Dorsolateral prefrontal cortex (tissue), 120 donors: ENCODE measurements at regions of chr4 and their contacts with region 1.

Region 1: GRCh38 chr4:80365928-80366327 is 30.4 kb downstream of the CFAP299 start:
- DNase-seq: peak in 2 of 10 donors; percentile 32
- H3K4me3 ChIP-seq: no peak overlapping the region
- H3K27ac ChIP-seq: no peak overlapping the region
- H3K27me3 ChIP-seq: peaks cover 0 to 3% (median 0%) of the 10 kb centered on the region in 45 donors
- CTCF ChIP-seq: peak in 48 of 56 donors; percentile 12 to 57 (median 36)

Region 2: DNA sequence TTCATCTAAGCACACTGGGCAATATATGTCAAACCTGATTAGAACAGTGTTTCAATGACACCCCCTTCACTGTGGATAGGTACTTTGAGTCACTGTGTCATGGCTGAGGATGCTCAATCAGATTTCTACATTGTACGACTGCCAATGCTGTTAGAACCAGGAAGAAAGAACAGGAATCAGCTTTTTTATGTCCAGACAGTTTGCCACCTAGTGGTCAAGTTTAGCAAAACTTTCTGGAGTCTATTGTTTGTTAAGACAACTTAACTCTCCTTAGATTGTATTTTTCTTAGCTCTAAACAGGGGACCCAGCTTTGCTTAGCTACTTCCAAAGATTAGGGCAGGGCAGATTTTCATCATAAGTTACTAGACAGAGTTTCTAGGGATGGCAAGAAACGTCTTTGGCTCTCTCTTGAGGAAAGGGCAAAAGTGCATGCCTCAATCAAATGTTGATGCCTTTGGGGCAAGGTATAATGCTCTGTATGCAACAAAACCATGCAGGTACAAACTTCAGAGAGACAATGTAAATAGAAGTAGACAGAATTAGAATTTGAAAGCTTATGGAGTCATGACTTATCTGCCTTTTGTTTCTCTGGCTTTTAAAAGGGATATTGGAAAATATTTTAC is 624.1 kb after region 1 on chr4:
- intact Hi-C with region 1: loop called (anchors 5 to 10 kb)
- DNase-seq: peak in 1 of 10 donors; percentile 9
- H3K4me3 ChIP-seq: no peak overlapping the region
- H3K27ac ChIP-seq: no peak overlapping the region
- H3K27me3 ChIP-seq: peaks cover 0 to 9% (median 0%) of the 10 kb centered on the region in 45 donors
- CTCF ChIP-seq: peak; percentile 54 to 84 (median 75)

Region 3: GRCh38 chr4:81040012-81040659 is 674.2 kb after region 1 on chr4:
- intact Hi-C with region 1: loop called in 1 of 2 experiments (anchors 5 kb)
- DNase-seq: no peak
- H3K4me3 ChIP-seq: no peak overlapping the region
- H3K27ac ChIP-seq: no peak overlapping the region
- H3K27me3 ChIP-seq: peaks cover 0 to 25% (median 0%) of the 10 kb centered on the region in 45 donors
- CTCF ChIP-seq: peak; percentile 50 to 79 (median 66)

Region 4: DNA sequence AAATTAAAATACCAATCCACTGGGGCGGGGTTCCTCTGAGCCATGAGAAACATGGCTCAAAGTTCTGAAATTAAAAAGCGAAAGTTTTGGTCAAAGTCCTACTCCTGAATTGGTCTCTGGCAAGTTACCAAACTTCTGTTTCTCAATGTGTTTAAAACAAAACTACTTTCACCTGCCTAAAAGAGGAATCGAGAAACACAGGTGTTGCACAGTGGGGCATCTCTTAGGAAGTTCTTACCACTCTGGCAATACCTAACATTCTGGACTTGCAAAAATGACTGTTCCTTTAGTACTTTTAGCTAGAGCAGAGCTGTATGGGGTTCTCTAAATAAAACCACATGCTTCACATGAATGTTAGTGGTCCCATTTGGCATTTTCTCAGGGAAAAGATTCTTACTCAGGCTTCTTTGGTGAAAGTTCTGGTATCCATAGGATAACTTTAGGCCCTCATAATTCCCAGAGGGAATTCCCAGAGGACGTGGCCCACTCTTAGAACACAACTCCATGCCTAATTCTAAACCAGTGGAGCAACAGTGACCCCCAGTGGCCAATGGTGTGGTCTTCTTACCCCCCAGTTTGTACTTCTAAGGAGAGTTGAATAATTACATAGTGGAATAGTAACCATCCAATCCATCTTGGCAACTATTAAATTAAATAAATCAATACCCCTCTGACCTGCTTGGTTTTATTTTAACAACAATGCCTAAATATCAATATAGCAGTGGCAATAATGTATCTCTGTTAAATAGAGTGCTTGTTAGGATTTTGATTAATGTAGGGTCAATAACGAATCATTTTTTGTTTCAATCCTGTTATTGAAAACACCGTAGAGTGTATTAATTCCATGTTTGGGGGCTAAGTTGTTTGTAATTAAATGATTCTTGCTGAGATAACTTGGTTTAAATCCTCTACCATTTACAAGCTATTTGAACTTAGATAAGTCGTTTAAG is 686.5 kb after region 1 on chr4:
- intact Hi-C with region 1: loop called in 1 of 2 experiments (anchors 10 kb)
- DNase-seq: peak in 9 of 10 donors; percentile 18 to 73 (median 53)
- H3K4me3 ChIP-seq: no peak overlapping the region
- H3K27ac ChIP-seq: no peak overlapping the region
- H3K27me3 ChIP-seq: peaks cover 0 to 2% (median 0%) of the 10 kb centered on the region in 45 donors
- CTCF ChIP-seq: peak in 55 of 56 donors; percentile 31 to 82 (median 67)